ENCODE measurements at regions of chr10 and their contacts with region 1.

Region 1: GRCh38 chr10:53827261-53827660 is 973.8 kb downstream of the PCDH15 start:
- DNase-seq: no peak
- CTCF ChIP-seq: no peak

Region 2: DNA sequence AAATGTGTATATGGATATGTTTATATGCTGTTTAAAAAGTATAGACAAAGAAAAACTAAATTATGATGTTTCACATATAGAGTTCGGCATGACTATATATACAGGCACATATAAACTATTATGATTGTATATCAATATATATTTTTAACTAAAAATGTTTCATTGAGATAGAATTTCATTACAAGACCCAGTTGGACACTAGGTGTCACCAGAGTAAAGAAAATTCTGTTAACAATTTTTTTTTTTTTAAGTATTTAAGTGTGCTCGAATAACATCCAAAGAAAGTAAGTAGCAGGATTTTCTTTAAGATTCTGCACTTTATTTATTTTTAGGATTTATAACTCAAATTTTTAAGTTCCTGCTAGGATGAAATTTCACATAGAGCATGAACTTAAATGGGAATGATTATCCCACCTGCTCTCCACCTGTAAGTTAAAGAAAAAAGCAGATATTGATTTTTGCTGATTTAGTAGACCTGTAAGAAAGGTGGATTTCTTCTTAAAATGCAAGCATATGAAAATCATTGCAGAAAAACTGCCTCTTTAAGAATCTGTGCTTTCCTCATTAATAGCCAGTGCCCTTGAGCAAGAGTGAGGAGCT is 12.3 kb after region 1 on chr10:
- CTCF ChIA-PET with region 1: interaction called, 19 read pairs
- POLR2A ChIA-PET with region 1: no interaction called
- DNase-seq: no peak
- CTCF ChIP-seq: peak; percentile 20

Region 3: GRCh38 chr10:53894145-53894544 is 66.9 kb after region 1 on chr10:
- CTCF ChIA-PET with region 1: no interaction called
- POLR2A ChIA-PET with region 1: no interaction called
- DNase-seq: no peak
- CTCF ChIP-seq: no peak

Region 4: DNA sequence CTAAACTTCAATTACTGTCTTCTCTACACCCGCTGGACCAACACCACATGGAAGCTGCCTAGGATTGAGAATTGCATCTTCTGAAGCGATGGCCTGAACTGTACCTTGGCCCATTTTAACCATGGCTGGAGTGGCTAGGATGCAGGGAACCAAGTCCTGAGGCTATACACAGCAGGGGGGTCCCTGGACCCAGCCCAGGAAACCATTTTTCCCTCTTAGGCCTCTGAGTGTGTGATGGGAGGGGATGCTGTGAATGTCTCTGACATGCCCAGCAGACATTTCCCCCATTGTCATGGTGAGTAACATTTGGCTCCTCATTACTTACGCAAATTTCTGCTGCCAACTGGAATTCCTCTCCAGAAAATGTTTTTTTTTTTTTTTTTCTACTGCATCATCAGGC is 151.0 kb after region 1 on chr10:
- CTCF ChIA-PET with region 1: no interaction called
- POLR2A ChIA-PET with region 1: no interaction called
- DNase-seq: no peak
- CTCF ChIP-seq: no peak

Region 5: DNA sequence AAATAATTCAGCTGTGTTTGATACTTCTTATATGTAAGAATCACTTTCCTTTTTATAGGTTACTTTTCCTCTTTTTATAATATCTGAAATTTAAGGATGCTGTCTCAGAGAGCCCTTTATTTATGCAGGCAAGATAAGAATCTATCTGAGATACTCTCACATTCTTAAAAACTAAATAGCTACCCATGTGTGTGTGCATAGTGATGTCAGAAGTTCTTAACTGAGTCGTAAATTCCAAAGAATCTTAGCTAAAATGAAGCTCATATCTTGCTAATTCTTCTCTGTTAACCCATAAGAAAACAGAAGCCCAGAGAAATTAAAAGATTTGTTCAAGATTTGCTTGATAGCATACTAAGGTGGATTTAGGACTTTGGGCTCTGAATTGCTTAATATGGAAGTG is 855.3 kb after region 1 on chr10:
- CTCF ChIA-PET with region 1: no interaction called
- POLR2A ChIA-PET with region 1: no interaction called
- DNase-seq: no peak
- CTCF ChIP-seq: no peak